A549 (cell line): ENCODE measurements at regions of chr16 and their contacts with region 1.

Region 1: DNA sequence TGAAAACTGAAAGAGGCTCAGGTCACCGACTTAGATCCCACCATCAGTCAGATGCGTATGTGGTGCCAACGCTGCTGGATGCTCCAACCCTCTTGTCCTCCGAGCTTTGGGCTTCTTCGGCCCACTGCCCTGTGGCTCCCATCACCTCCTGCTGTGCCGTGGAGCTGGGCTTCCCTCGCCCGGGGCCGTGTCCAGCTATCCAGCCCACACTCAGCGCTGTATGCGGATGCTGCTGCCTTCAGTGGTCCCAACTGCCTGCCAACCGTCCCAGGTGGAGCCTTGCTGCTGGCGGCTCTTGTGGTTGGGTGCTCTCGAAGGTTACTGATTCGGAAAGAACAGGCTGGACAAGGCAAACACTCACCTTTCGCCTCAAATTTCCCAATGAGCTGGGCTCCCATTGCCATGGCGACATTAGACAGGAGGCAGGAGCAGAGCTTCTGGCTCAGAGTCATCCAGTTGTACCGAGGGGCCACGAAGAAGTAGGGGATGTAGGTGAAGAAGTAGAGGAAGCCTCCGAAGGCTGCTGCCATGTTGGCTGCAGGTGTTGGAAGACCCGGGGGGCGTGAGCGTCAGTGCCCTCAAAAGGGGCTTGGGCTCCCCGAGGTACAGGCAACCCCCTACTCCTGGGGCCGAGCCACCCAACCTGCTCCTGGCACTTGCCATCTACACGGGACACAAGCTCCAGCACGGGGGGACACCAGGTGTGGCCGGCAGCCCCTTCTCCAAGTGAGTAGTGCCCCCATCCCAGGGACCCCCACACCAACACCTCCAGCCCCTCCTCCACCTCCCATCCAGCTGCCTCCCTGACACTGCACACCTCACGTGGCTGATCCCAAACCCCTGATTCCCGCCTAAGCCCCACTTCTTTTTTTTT is 32.2 kb downstream of the ABCA3 start:
- DNase-seq: no peak
- ATAC-seq: no peak
- H3K4me3 ChIP-seq: no peak overlapping the region
- H3K27ac ChIP-seq: no peak overlapping the region
- H3K4me1 ChIP-seq: no peaks in the 10 kb centered on the region
- CTCF ChIP-seq: no peak
- EP300 ChIP-seq: no peak
- POLR2A ChIP-seq: no peak
- RAD21 ChIP-seq: no peak

Region 2: DNA sequence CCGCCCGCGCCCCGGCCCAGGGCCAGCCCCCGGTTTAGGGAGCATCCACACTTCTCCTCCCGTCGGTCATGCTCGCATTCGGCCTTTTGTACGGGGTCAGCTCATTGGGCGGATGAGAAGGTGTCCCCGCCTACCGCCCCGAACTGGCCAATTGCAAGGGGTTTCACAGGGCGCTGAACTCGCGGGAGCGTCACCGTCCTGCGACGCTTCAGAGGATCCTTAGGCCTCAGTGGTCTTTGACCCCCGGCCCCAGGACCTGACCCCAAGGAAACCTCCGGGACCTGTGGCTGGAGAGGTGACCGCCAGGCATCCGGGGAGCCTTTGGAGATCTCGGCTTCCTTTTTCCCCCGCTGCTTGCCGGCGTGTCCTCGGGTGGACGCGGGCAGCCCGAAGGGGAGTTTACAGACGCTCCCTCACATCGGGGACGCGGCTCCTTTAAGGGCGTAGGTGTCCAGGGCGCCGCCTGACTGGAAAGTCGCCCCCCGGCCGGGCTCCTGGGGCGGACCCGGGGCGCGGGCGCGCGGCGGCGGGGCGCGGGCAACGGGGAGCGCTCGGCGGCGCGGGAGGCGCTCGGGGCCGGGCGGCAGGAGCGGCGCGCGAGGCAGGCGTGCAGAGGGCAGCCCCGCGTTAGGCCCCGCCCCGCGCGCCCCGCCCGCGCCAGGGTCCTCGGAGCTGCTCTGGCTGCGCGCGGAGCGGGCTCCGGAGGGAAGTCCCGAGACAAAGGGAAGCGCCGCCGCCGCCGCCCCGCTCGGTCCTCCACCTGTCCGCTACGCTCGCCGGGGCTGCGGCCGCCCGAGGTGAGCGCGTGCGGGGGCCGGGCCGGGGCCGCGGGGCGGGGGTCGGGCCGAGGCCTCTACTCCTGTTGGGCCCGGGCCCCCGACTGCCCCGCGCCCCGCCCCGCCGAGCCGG is 999.1 kb before region 1 on chr16 and contains the start of gene UBE2I:
- CTCF ChIA-PET with region 1: no interaction called
- POLR2A ChIA-PET with region 1: interaction called, 11 read pairs
- DNase-seq: peak; percentile 88 to 99
- ATAC-seq: peak; percentile 80 to 93
- H3K4me3 ChIP-seq: peak within 1 kb of the TSS; percentile 80
- H3K27ac ChIP-seq: peak within 1 kb of the TSS; percentile 97 to 98
- H3K4me1 ChIP-seq: peaks cover 19% of the 10 kb centered on the region
- CTCF ChIP-seq: no peak
- EP300 ChIP-seq: no peak
- POLR2A ChIP-seq: peak; percentile 39
- RAD21 ChIP-seq: no peak
- polyA plus RNA-seq, gene UBE2I: 131 and 170 TPM in 2 replicates

Region 3: GRCh38 chr16:2358811-2359210 is 50.5 kb after region 1 on chr16:
- CTCF ChIA-PET with region 1: no interaction called
- POLR2A ChIA-PET with region 1: no interaction called
- DNase-seq: no peak
- ATAC-seq: no peak
- H3K4me3 ChIP-seq: no peak overlapping the region
- H3K27ac ChIP-seq: no peak overlapping the region
- H3K4me1 ChIP-seq: no peaks in the 10 kb centered on the region
- CTCF ChIP-seq: no peak
- EP300 ChIP-seq: no peak
- POLR2A ChIP-seq: no peak
- RAD21 ChIP-seq: no peak